Activated naive CD4-positive, alpha-beta T cell treated with anti-CD3 and anti-CD28 coated beads for 36 hours (primary cell): ENCODE measurements at regions of chr3 and their contacts with region 1.

Region 1: GRCh38 chr3:172595641-172596393 is 72.6 kb upstream of the TNFSF10 start:
- DNase-seq: peak; percentile 58
- H3K4me3 Mint-ChIP-seq: peak overlapping the region; percentile 77
- H3K27ac Mint-ChIP-seq: peak overlapping the region; percentile 91
- H3K4me1 Mint-ChIP-seq: peaks cover 55% of the 10 kb centered on the region
- H3K27me3 Mint-ChIP-seq: no peaks in the 10 kb centered on the region

Region 2: DNA sequence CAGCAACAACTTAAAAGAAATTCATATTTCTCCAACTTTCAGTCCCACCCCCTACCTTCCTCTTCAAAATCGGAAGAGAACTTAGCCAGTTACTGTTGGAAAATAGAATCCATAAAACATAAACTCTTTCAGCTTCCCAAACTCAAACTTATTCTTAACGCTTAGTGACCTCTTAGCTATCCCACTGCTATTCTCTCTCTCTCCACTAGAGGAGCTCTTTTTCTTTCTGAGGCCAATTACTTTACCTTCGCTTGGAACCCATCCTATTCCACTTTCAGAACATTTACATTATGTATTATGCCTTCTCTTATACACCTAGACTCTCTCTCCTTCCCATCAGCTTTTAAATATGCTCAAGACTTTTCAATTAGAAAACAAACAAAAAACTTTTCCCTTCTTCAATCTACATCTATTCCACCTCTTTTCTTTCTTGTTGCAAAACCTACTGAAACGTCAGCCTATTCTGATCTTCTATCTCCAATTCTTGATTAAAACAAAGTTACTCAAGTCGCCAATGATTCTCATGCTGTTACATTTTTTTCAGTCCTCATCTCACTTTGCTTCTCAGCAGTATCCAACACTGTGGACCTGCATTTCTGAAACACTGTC is 134.2 kb before region 1 on chr3:
- CTCF ChIA-PET with region 1: interaction called, 40 read pairs
- intact Hi-C with region 1: loop called (anchors 1 kb)
- DNase-seq: no peak
- H3K4me3 Mint-ChIP-seq: no peak overlapping the region
- H3K27ac Mint-ChIP-seq: no peak overlapping the region
- H3K4me1 Mint-ChIP-seq: peaks cover 4% of the 10 kb centered on the region
- H3K27me3 Mint-ChIP-seq: no peaks in the 10 kb centered on the region

Region 3: GRCh38 chr3:172511783-172512762 is 83.7 kb before region 1 on chr3:
- CTCF ChIA-PET with region 1: interaction called, 122 read pairs
- intact Hi-C with region 1: loop called (anchors 1 kb)
- DNase-seq: peak; percentile 92
- H3K4me3 Mint-ChIP-seq: peak overlapping the region; percentile 68
- H3K27ac Mint-ChIP-seq: peak overlapping the region; percentile 93
- H3K4me1 Mint-ChIP-seq: peaks cover 82% of the 10 kb centered on the region
- H3K27me3 Mint-ChIP-seq: no peaks in the 10 kb centered on the region

Region 4: GRCh38 chr3:172536993-172537419 is 58.8 kb before region 1 on chr3:
- CTCF ChIA-PET with region 1: interaction called, 5 read pairs
- intact Hi-C with region 1: loop called (anchors 1 kb)
- DNase-seq: peak; percentile 49
- H3K4me3 Mint-ChIP-seq: peak overlapping the region; percentile 8
- H3K27ac Mint-ChIP-seq: peak overlapping the region; percentile 91
- H3K4me1 Mint-ChIP-seq: peaks cover 40% of the 10 kb centered on the region
- H3K27me3 Mint-ChIP-seq: no peaks in the 10 kb centered on the region

Region 5: DNA sequence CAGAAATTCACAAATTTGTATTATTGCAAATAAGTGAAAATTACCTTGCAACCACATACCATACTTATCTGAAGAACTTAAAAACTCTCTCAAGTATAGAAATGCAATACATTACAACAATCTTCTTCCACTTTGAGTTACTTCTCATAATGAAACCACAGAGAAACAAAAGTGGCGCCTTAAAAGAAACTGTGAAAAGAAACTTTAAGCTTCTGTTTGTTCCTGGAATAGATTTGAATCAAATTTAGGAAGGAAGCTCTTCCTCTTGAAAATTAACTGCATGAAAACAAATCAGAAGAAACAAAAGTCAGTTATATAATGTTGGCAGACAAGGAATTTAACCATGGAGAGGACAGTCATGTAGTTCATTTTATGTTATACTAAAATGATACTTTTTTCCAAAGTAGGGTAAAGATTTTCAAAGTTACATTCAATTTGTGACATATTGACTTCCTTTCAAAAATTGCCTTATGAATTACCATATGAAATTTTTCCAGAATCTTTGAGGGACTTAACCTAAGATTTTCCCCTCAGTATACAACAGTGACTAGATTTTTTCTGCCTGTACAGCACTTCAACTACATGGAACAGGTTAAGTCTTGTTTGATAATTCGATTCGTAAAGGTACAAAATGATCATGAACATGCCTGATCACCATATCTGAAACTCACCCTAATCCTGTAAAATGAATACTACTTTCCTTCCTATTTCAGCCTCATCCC is 15.0 kb before region 1 on chr3:
- CTCF ChIA-PET with region 1: interaction called, 47 read pairs
- intact Hi-C with region 1: loop called (anchors 1 kb)
- DNase-seq: no peak
- H3K4me3 Mint-ChIP-seq: peak overlapping the region; percentile 22
- H3K27ac Mint-ChIP-seq: peak overlapping the region; percentile 85
- H3K4me1 Mint-ChIP-seq: peaks cover 85% of the 10 kb centered on the region
- H3K27me3 Mint-ChIP-seq: no peaks in the 10 kb centered on the region

Region 6: GRCh38 chr3:172622916-172623700 is 27.3 kb after region 1 on chr3:
- CTCF ChIA-PET with region 1: interaction called, 16 read pairs
- intact Hi-C with region 1: loop called (anchors 1 kb)
- DNase-seq: peak; percentile 64
- H3K4me3 Mint-ChIP-seq: no peak overlapping the region
- H3K27ac Mint-ChIP-seq: no peak overlapping the region
- H3K4me1 Mint-ChIP-seq: peaks cover 11% of the 10 kb centered on the region
- H3K27me3 Mint-ChIP-seq: no peaks in the 10 kb centered on the region